ENCODE measurements at regions of chr5 and their contacts with region 1.

Region 1: GRCh38 chr5:172123269-172123692 is 64.7 kb downstream of the STK10 start:
- DNase-seq: peak; percentile 67
- ATAC-seq: peak; percentile 93
- H3K4me3 ChIP-seq: no peak overlapping the region
- H3K27ac ChIP-seq: no peak overlapping the region
- H3K4me1 ChIP-seq: peaks cover 5% of the 10 kb centered on the region; the same call in 1 of the 2 replicates
- H3K27me3 ChIP-seq: no peaks in the 10 kb centered on the region
- CTCF ChIP-seq: peak; percentile 31; the same call in 1 of the 2 replicates
- POLR2A ChIP-seq: no peak
- RAD21 ChIP-seq: peak; percentile 29; the same call in 1 of the 2 replicates

Region 2: GRCh38 chr5:172078726-172079345 is 44.4 kb before region 1 on chr5:
- CTCF ChIA-PET with region 1: no interaction called
- POLR2A ChIA-PET with region 1: no interaction called
- dilution Hi-C with region 1: no loop called
- in situ Hi-C with region 1: no loop called
- intact Hi-C with region 1: no loop called
- DNase-seq: no peak
- ATAC-seq: no peak
- H3K4me3 ChIP-seq: no peak overlapping the region
- H3K27ac ChIP-seq: no peak overlapping the region
- H3K4me1 ChIP-seq: peaks cover 4% of the 10 kb centered on the region; the same call in 1 of the 2 replicates
- H3K27me3 ChIP-seq: no peaks in the 10 kb centered on the region
- CTCF ChIP-seq: no peak
- POLR2A ChIP-seq: no peak
- RAD21 ChIP-seq: no peak

Region 3: DNA sequence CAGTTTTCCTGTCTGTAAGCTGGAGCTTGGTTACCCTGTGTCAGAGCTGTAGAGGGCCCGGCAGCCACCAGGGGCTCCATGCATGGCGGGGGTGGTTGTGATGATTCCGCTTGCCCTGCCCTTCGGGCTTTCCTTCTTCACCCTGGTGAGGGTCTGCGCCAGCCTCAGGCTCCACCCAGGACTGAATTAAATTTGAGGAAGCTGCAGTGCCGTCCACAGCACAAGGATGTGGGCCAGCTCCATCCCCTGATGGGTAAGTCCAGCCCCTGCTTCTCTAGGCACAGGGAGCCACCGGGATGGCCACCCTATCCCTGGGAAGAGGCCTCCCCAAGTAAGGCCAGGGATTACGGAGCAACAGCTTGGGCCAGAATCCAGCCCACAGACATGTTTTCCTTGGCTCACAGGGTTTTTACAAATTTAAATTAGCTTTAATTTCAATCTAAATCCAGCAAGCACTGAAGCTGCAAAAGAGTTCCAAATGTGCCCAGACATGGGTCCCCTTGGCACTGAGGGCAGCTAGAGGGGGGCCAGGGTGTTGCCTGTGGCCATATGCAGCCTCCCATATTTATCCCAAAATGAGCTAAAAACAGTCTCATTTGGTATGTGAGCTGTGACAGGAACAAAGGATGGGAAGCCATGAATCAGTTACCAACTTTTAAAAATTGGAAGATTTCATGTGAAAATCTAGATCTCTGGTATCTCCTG is 27.6 kb before region 1 on chr5:
- CTCF ChIA-PET with region 1: no interaction called
- POLR2A ChIA-PET with region 1: no interaction called
- dilution Hi-C with region 1: no loop called
- in situ Hi-C with region 1: no loop called
- intact Hi-C with region 1: no loop called
- DNase-seq: no peak
- ATAC-seq: no peak
- H3K4me3 ChIP-seq: no peak overlapping the region
- H3K27ac ChIP-seq: no peak overlapping the region
- H3K4me1 ChIP-seq: peaks cover 12% of the 10 kb centered on the region
- H3K27me3 ChIP-seq: no peaks in the 10 kb centered on the region
- CTCF ChIP-seq: no peak
- POLR2A ChIP-seq: no peak
- RAD21 ChIP-seq: no peak

Region 4: DNA sequence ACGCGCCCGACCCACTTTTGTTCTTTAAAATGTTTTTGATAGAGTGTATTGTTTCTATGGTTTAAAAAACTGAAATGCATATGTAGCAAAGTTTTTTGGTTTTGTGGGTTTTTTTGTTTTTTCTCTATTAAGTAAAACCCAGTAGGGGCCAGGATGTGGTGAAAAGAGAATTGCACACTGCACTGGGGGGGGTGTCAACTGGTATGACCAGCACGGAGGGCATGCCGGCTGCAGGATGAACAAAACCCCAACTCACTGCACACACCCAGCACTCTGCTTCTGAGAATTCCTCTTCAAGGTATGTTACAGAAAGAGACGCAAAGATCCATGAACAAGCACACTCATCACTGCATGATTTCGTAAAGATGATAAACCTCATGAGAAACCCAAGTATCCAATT is 10.2 kb before region 1 on chr5:
- CTCF ChIA-PET with region 1: no interaction called
- POLR2A ChIA-PET with region 1: interaction called, 11 read pairs
- dilution Hi-C with region 1: no loop called
- in situ Hi-C with region 1: no loop called
- intact Hi-C with region 1: no loop called
- DNase-seq: no peak
- ATAC-seq: no peak
- H3K4me3 ChIP-seq: no peak overlapping the region
- H3K27ac ChIP-seq: no peak overlapping the region
- H3K4me1 ChIP-seq: peaks cover 11% of the 10 kb centered on the region
- H3K27me3 ChIP-seq: no peaks in the 10 kb centered on the region
- CTCF ChIP-seq: no peak
- POLR2A ChIP-seq: no peak
- RAD21 ChIP-seq: no peak

Region 5: GRCh38 chr5:172958331-172959046 is 835.2 kb after region 1 on chr5:
- CTCF ChIA-PET with region 1: no interaction called
- POLR2A ChIA-PET with region 1: no interaction called
- dilution Hi-C with region 1: no loop called
- in situ Hi-C with region 1: no loop called
- intact Hi-C with region 1: no loop called
- DNase-seq: peak; percentile 41
- ATAC-seq: peak; percentile 69
- H3K4me3 ChIP-seq: peak overlapping the region; percentile 53
- H3K27ac ChIP-seq: peak overlapping the region; percentile 75
- H3K4me1 ChIP-seq: peaks cover 13% of the 10 kb centered on the region
- H3K27me3 ChIP-seq: no peaks in the 10 kb centered on the region
- CTCF ChIP-seq: no peak
- POLR2A ChIP-seq: no peak
- RAD21 ChIP-seq: no peak